Activated naive CD4-positive, alpha-beta T cell treated with anti-CD3 and anti-CD28 coated beads, Interleukin-2, amount 10 ng/mL, durations not matched to agents 7 days and 5 days (primary cell): ENCODE measurements at regions of chr18 and their contacts with region 1.

Region 1: DNA sequence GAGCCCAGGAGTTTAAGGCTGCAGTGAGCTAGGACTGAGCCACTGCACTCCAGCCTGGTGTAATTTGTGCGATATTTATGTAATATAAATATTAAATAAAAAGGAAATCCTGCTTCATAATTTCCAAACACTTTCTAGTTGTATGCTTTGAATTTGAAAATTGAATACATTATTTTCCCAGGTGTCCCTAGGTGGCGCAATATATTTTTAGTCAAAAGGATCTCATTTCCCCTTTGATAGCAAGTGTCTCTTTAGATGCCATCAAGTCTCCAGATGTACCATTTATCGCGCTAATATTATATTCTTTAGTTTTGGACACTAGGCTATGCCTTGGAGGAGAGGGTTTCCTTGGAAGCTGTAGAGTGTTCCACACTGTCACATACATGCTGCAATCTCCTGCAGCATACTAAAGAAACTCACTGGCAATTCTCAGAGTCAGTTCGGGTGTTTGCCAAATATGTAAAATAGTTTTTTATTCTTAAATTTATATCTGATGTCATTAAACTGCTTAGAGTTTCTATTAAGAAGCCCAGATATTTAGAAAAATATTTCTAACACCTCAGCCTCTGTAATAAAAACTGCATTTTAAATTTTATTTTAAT is 5.6 kb upstream of the WDR7 start:
- DNase-seq: no peak
- H3K4me3 Mint-ChIP-seq: no peak overlapping the region
- H3K27ac Mint-ChIP-seq: no peak overlapping the region
- H3K4me1 Mint-ChIP-seq: peaks cover 21% of the 10 kb centered on the region
- H3K27me3 Mint-ChIP-seq: no peaks in the 10 kb centered on the region

Region 2: DNA sequence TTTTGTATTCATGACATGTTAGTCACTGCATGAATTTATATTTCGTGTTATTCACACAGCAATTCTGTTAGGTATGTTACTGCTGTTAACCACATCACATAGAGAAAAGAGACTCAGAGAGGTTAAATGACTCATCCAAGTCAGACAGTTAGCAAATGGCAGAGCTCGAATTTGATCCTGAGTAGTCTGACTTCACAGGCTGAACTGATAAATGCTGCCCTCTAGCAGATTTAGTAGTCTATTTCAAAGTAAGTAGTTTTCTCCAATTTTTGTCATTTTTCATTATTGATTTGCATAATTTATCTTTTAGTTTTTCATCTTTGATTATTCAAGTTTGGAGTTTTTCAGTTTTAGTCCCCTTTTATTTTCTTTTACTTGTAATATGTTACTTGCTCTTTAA is 63.9 kb after region 1 on chr18:
- CTCF ChIA-PET with region 1: interaction called, 16 read pairs
- DNase-seq: peak; percentile 46
- H3K4me3 Mint-ChIP-seq: no peak overlapping the region
- H3K27ac Mint-ChIP-seq: no peak overlapping the region
- H3K4me1 Mint-ChIP-seq: peaks cover 3% of the 10 kb centered on the region
- H3K27me3 Mint-ChIP-seq: no peaks in the 10 kb centered on the region

Region 3: DNA sequence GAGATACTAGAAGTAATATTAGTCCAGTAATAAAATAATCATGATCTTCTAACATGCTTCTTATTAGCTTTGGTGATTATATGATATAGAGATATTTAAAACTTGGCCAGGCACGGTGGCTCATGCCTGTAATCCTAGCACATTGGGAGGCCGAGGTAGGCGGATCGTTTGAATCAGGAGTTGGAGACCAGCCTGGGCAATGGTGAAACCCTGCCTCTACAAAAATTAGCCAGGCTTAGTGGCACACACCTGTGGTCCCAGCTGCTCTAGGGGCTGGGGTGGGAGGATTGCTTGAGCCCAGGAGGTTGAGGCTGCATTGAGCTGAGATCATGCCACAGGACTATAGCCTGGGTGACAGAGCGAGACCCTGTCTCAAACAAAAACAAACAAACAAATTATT is 92.7 kb after region 1 on chr18:
- CTCF ChIA-PET with region 1: no interaction called
- DNase-seq: no peak
- H3K4me3 Mint-ChIP-seq: no peak overlapping the region
- H3K27ac Mint-ChIP-seq: no peak overlapping the region
- H3K4me1 Mint-ChIP-seq: no peaks in the 10 kb centered on the region
- H3K27me3 Mint-ChIP-seq: no peaks in the 10 kb centered on the region